ENCODE measurements at regions of chr7 and their contacts with region 1.

Region 1: GRCh38 chr7:85186521-85187241 is at the start of gene SEMA3D:
- DNase-seq: peak; percentile 95
- H3K4me3 ChIP-seq: peak within 1 kb of the TSS; percentile 84
- H3K27ac ChIP-seq: peak within 1 kb of the TSS; percentile 84
- H3K4me1 ChIP-seq: peaks cover 15% of the 10 kb centered on the region
- H3K27me3 ChIP-seq: no peaks in the 10 kb centered on the region
- CTCF ChIP-seq: peak; percentile 90
- total RNA-seq, gene SEMA3D: 23.3 and 32.0 TPM in 2 replicates

Region 2: DNA sequence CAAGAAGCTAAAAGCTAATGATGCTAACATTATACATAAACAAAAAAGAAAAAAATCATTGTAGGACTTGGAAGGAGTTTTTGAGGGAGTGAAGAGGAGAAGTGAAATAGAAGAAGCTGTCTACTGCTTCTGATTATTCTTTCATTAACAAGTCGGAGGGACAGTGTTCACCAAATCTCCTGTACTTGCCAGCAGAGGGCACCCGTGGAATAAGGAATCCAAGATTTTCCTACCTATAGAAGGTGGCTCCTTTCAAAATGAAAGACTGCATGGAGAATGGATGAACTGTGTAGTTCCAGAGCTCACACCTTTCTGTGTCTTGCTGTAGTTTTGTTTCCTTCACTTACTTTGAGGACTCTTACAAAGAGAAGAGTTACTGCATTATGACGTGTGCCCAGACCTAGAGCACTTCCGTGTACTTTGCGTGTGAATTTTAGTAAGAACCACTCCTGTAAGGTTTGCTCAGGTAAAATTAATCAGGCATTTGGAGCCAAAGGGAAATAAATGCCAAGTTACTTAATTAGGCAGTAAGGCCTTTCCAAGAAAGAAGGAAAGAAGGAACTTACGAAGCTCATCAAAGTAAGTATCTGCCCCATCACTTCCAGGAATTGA is 145.0 kb before region 1 on chr7:
- CTCF ChIA-PET with region 1: interaction called, 4 read pairs
- POLR2A ChIA-PET with region 1: no interaction called
- intact Hi-C with region 1: loop called (anchors 1 kb)
- DNase-seq: peak; percentile 80
- H3K4me3 ChIP-seq: no peak overlapping the region
- H3K27ac ChIP-seq: no peak overlapping the region
- H3K4me1 ChIP-seq: peaks cover 8% of the 10 kb centered on the region
- H3K27me3 ChIP-seq: no peaks in the 10 kb centered on the region
- CTCF ChIP-seq: peak; percentile 87

Region 3: GRCh38 chr7:85464042-85464651 is 277.5 kb after region 1 on chr7:
- CTCF ChIA-PET with region 1: interaction called, 4 read pairs
- POLR2A ChIA-PET with region 1: no interaction called
- intact Hi-C with region 1: loop called (anchors 2 kb)
- DNase-seq: peak; percentile 47
- H3K4me3 ChIP-seq: no peak overlapping the region
- H3K27ac ChIP-seq: no peak overlapping the region
- H3K4me1 ChIP-seq: no peaks in the 10 kb centered on the region
- H3K27me3 ChIP-seq: no peaks in the 10 kb centered on the region
- CTCF ChIP-seq: peak; percentile 47

Region 4: DNA sequence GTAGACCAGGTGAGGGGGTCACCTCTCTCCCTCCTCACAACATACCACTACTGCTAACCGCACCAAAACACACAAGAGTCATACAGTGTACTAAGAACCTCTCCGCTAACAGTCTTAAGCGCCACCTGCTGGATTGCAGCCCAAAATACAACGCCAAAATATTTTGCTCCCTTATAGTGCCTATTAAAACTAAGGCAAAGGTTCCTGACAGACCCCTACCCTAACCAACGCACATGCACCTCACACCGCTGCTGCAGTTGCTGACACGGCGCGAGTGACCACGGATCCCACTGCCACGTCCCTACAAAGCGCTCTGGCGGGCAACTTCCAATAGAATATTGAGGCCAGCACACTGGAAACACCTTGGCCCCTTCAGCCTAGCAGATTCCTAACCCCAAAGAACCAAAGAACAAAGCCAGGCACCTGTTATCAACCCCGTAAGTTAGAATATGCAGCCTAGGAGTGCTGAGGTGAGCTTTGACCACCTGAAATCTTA is 563.8 kb after region 1 on chr7:
- CTCF ChIA-PET with region 1: no interaction called
- POLR2A ChIA-PET with region 1: no interaction called
- intact Hi-C with region 1: loop called (anchors 5 kb)
- DNase-seq: peak; percentile 72
- H3K4me3 ChIP-seq: no peak overlapping the region
- H3K27ac ChIP-seq: no peak overlapping the region
- H3K4me1 ChIP-seq: no peaks in the 10 kb centered on the region
- H3K27me3 ChIP-seq: no peaks in the 10 kb centered on the region
- CTCF ChIP-seq: peak; percentile 79

Region 5: GRCh38 chr7:85829817-85830432 is 643.2 kb after region 1 on chr7:
- CTCF ChIA-PET with region 1: no interaction called
- POLR2A ChIA-PET with region 1: no interaction called
- intact Hi-C with region 1: loop called (anchors 5 kb)
- DNase-seq: peak; percentile 36
- H3K4me3 ChIP-seq: no peak overlapping the region
- H3K27ac ChIP-seq: no peak overlapping the region
- H3K4me1 ChIP-seq: no peaks in the 10 kb centered on the region
- H3K27me3 ChIP-seq: no peaks in the 10 kb centered on the region
- CTCF ChIP-seq: peak; percentile 56